B cell (primary cell): ENCODE measurements at regions of chr1 and their contacts with region 1.

Region 1: DNA sequence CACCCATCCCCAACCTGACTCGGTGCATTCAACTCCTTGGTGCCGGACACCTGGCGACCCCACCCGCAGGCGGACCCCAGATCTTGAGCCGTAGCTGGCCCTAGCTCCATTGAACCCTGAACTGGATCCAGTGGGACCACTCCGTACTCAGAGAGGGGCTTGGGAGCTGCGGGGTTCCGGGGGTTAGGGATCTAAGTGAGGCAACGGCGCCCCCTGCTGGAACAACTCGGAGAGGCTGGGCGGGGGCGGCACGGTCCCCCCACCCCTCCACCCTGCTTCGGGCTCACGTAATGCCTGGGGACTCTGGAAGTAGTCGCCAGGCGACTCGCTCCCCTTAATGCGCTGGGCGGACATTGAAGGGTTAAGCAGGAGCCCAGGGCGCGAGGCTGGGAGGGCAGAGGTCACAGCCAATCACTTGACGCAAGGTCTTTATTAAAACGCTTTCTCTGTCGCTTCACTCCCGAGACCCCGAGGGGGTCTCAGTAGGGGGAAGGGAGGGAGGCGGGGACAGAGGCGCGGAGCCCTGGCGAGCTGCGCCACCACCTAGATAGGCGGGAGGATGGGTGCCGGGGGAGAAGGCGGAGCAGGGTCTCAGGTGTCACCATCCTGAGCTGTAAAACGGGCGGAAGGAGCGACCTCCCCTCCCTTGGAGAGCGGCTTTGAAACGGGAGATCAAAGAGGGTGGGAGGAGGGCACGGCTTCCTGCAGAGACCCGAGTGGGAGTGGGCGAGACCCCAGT is 704 bp upstream of the CRABP2 start:
- DNase-seq: peak; percentile 79
- ATAC-seq: peak; percentile 68
- H3K4me3 ChIP-seq: peak overlapping the region in 4 of 5 experiments; percentile 54 to 70 (median 58)
- H3K4me3 Mint-ChIP-seq: peak overlapping the region; percentile 89
- H3K27ac ChIP-seq: no peak overlapping the region
- H3K27ac Mint-ChIP-seq: no peak overlapping the region
- H3K4me1 ChIP-seq: peaks cover 28% of the 10 kb centered on the region in 2 donors
- H3K4me1 Mint-ChIP-seq: peaks cover 32% of the 10 kb centered on the region
- H3K27me3 ChIP-seq: peaks cover 3 to 51% (median 31%) of the 10 kb centered on the region in 4 experiments
- H3K27me3 Mint-ChIP-seq: peaks cover 20% of the 10 kb centered on the region
- CTCF ChIP-seq: peak; percentile 82

Region 2: GRCh38 chr1:156717275-156717805 is 11.3 kb after region 1 on chr1:
- CTCF ChIA-PET with region 1: interaction called, 10 read pairs
- POLR2A ChIA-PET with region 1: interaction called, 6 read pairs
- intact Hi-C with region 1: no loop called
- DNase-seq: no peak
- ATAC-seq: no peak
- H3K4me3 ChIP-seq: no peak overlapping the region
- H3K4me3 Mint-ChIP-seq: no peak overlapping the region
- H3K27ac ChIP-seq: no peak overlapping the region
- H3K27ac Mint-ChIP-seq: no peak overlapping the region
- H3K4me1 ChIP-seq: no peaks in the 10 kb centered on the region
- H3K4me1 Mint-ChIP-seq: peaks cover 2% of the 10 kb centered on the region
- H3K27me3 ChIP-seq: no peaks in the 10 kb centered on the region
- H3K27me3 Mint-ChIP-seq: no peaks in the 10 kb centered on the region
- CTCF ChIP-seq: no peak

Region 3: DNA sequence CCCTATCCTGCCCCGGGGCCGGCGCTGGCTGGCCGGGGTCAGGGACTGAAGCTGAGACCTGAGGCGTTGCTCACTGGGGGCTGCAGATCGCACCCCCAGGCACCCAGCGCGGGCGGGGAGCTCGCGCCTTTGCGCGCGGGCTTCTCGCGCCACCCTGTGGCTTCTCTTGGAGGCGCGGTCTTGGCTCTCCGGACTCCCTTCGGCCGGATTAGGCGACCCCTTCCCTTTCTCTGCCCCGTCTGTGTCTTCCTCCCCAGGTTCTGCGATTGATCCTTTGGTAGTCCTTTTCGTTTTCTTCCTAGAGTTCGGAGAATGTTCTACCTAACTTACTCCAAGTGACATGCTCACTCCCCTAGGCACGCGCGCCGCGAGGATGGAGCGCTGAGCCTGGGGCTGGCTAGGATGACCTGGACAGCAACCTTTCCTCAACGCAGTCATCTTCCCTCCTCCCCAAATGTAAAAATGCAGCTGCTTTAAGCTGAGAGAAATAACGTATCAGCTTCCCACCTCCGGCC is 154.1 kb after region 1 on chr1:
- CTCF ChIA-PET with region 1: no interaction called
- POLR2A ChIA-PET with region 1: no interaction called
- intact Hi-C with region 1: loop called (anchors 5 kb)
- DNase-seq: peak; percentile 71
- ATAC-seq: peak; percentile 73
- H3K4me3 ChIP-seq: peak overlapping the region in 4 of 5 experiments; percentile 15 to 54 (median 44)
- H3K4me3 Mint-ChIP-seq: peak overlapping the region; percentile 83
- H3K27ac ChIP-seq: no peak overlapping the region
- H3K27ac Mint-ChIP-seq: no peak overlapping the region
- H3K4me1 ChIP-seq: peaks cover 23 to 30% of the 10 kb centered on the region in 2 donors
- H3K4me1 Mint-ChIP-seq: peaks cover 18% of the 10 kb centered on the region
- H3K27me3 ChIP-seq: peaks cover 0 to 80% (median 39%) of the 10 kb centered on the region in 4 experiments
- H3K27me3 Mint-ChIP-seq: peaks cover 67% of the 10 kb centered on the region
- CTCF ChIP-seq: peak; percentile 73